Activated CD4-positive, alpha-beta T cell treated with anti-CD3 and anti-CD28 coated beads for 36 hours (primary cell): ENCODE measurements at regions of chr4 and their contacts with region 1.

Region 1: GRCh38 chr4:185086053-185086452 is 57.0 kb upstream of the SLC25A4 start:
- DNase-seq: no peak
- ATAC-seq: no peak
- H3K4me3 Mint-ChIP-seq: no peak overlapping the region
- H3K27ac Mint-ChIP-seq: no peak overlapping the region
- H3K4me1 Mint-ChIP-seq: no peaks in the 10 kb centered on the region
- H3K27me3 Mint-ChIP-seq: peaks cover 12% of the 10 kb centered on the region

Region 2: GRCh38 chr4:185096032-185096653 is 10.1 kb after region 1 on chr4:
- CTCF ChIA-PET with region 1: interaction called, 10 read pairs
- POLR2A ChIA-PET with region 1: no interaction called
- intact Hi-C with region 1: no loop called
- DNase-seq: peak; percentile 41
- ATAC-seq: no peak
- H3K4me3 Mint-ChIP-seq: no peak overlapping the region
- H3K27ac Mint-ChIP-seq: no peak overlapping the region
- H3K4me1 Mint-ChIP-seq: no peaks in the 10 kb centered on the region
- H3K27me3 Mint-ChIP-seq: peaks cover 14% of the 10 kb centered on the region